GM10248 (cell line): ENCODE measurements at regions of chr5 and their contacts with region 1.

Region 1: DNA sequence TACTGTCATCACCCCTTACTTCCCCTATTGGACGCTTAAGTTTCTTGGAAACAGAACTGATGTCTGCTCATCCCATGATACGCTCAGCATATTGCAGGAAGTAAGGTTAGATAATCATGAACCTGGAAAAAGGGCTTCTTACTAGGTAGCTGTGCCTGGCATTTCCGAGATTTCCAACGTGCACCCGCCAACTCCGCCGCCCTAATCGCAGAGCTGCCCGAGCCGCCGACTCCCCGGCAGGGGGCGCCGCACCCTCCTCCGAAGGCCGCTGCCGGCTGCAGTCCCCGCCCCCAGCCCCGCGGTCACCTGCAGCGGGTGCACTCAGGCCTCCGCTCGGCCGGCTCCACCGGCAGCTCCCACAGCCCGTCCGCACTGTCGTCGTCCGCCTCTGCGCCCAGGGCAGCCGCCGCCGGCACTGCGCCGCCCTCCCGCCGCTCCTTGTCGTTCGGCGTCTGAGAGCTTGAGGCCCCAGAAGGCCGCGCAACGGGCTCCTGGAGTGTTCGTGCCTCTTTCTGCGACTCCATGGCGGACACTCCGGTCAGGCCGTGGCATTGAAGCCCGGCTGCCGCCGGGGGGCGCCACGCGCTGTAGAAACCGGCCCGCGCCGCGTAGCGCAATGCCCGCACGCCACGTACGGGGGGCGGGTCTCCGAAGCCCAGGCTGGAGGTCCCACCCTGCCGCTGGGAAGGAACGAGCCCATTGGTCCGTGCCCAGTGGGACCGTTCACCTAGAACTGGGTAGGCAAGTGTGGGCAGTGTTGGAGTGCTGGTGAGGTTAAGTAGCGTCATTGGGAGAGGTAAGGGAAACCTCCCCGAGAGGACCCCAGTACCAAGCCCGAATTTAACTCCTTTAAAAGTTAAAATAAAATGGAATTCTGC is at the start of gene DTWD2:
- DNase-seq: peak; percentile 93
- CTCF ChIP-seq: peak; percentile 98

Region 2: GRCh38 chr5:118698774-118699173 is 289.5 kb before region 1 on chr5:
- CTCF ChIA-PET with region 1: no interaction called
- POLR2A ChIA-PET with region 1: no interaction called
- DNase-seq: no peak
- CTCF ChIP-seq: peak; percentile 14

Region 3: DNA sequence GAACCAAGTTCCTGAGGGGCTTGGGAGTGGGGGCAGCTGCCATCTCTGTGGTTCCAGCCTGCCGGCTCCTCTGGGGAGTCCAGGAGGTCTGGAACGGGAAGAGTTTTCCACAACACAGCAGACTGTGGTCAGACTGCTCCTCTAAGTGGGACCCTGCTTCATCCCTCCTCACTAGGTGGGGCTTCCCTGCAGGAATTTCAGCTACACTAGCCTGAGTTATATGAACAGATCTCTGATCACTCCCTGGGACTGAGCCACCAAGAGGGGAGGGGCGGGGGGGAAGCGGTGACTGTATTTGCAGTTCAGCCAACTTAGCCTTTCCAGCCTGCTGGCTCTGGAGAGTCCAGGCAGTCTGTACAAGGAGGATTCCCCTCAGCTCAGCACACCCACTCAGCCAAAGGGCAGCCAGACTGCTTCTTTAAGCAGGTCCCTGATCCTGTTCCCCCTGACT is 19.3 kb before region 1 on chr5:
- CTCF ChIA-PET with region 1: interaction called, 13 read pairs
- POLR2A ChIA-PET with region 1: no interaction called
- DNase-seq: no peak
- CTCF ChIP-seq: no peak

Region 4: GRCh38 chr5:119031905-119032304 is 43.7 kb after region 1 on chr5:
- CTCF ChIA-PET with region 1: interaction called, 13 read pairs
- POLR2A ChIA-PET with region 1: no interaction called
- DNase-seq: peak; percentile 46
- CTCF ChIP-seq: no peak

Region 5: GRCh38 chr5:119267958-119268386 is 279.7 kb after region 1 on chr5:
- CTCF ChIA-PET with region 1: interaction called, 25 read pairs
- POLR2A ChIA-PET with region 1: no interaction called
- DNase-seq: peak; percentile 83
- CTCF ChIP-seq: peak; percentile 81

Region 6: DNA sequence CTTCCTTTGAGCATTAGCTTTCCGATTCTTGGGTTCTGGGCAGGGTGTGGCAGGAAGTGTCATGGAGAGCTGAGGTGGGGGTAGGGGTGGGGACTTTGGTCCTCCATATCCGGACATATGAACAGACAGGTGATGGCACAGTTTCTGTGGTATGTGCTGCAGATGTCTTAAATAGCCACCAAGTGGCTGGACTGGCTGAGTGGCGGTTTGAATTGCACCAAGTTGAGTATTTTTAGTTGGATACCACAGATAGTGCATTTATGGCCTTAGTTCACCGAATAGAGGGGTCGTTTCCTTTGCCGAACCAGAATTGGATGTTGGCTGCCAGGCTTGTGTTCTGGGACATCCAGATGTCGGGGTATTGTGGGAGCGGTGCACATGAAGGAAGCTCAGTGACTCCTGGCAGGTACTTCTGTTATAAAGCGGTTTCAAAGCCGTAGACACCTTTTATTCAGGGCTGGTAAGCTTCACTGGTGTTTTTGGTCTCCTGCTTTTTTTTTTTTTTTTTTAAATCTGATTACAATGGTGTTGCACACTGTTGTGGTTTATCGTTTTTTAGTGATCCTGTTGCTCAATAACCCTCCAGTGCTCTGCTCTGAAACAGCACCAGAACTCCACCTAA is 352.5 kb after region 1 on chr5:
- CTCF ChIA-PET with region 1: interaction called, 12 read pairs
- POLR2A ChIA-PET with region 1: no interaction called
- DNase-seq: peak; percentile 55
- CTCF ChIP-seq: no peak

Region 7: DNA sequence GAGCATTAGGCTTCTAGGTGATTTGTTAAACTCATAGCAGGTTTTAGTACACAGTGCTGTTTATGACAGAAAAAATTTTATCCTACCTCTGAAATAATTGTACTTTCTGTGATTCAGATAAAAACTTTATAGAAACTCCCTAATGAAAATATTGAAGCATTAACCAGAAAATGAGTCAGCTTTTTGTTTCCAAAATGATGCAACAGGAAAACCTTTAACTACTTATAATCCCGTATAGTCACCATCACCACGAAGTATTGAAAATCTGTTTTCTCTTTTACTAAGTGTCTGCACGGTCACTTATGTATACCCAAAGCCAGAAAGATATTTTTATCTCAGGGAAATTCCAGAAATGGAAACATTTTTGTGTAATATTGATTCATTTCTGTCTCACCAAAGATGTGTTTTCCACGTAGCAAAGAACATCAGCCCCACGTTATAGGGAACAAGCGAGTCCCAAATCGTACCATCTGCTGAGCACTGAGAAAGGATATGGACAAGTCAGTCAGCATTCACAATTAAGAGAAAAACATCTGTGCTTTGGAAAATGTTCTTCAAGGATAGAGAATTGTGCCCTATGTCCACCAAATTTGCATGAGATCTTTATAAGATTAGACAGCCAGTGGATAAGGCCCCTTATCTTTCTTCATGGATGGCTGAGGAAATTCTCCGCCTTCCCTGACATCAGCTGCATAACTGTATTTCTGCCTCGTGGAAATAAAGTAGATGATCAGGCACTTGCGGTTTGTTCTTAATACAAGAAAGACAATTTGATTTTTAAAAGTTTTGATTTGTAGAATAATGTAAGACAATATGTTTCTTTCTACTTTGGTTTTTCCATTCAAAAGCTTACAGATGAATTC is 409.5 kb after region 1 on chr5:
- CTCF ChIA-PET with region 1: interaction called, 12 read pairs
- POLR2A ChIA-PET with region 1: no interaction called
- DNase-seq: no peak
- CTCF ChIP-seq: no peak

Region 8: DNA sequence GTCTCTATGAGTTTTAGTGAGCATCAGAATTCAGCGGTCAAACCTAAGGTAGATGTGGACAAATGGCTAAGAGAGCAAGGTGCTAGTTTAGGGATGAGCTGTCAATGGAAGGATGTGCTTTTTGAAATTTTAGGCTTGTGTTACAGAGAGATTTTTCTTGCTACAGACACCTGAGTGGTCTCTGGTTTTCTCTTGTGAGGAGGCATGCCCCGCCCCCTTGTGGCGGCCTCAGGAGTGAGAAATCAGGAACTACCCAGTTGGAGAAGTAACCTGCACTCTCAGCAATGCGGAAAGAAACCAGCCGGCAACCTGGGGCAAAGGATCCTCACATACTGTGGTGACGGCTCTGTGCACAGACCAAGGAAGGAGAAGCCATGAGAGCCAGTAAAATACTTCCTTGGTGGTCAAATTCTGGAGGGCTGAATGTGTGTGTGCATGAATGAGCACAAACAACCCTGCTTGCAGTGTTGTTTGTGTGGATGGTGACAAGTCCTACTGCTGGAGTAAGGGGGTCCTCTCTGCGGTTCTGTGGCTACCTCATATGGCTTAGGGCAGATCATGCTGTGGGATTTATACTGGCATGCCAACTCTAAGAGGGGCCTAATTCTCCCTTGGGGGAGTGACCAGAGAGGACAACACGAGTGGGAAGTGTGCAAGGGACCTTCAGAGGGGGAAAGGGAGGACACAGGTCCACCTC is 447.4 kb after region 1 on chr5:
- CTCF ChIA-PET with region 1: interaction called, 41 read pairs
- POLR2A ChIA-PET with region 1: no interaction called
- DNase-seq: peak; percentile 52
- CTCF ChIP-seq: peak; percentile 56